ENCODE measurements at regions of chr15 and their contacts with region 1.

Region 1: GRCh38 chr15:48877630-48878595 is at the start of gene EID1:
- DNase-seq: peak; percentile 93 to 97 (median 97)
- ATAC-seq: peak; percentile 99 to 100
- H3K4me3 ChIP-seq: peak within 1 kb of the TSS; percentile 72
- H3K27ac ChIP-seq: peak within 1 kb of the TSS; percentile 91
- H3K4me1 ChIP-seq: no peaks in the 10 kb centered on the region
- H3K27me3 ChIP-seq: no peaks in the 10 kb centered on the region
- total RNA-seq, gene EID1: 258 to 299 (median 276) TPM

Region 2: GRCh38 chr15:48810414-48811317 is 67.2 kb before region 1 on chr15 and contains the start of gene CEP152:
- intact Hi-C with region 1: no loop called
- DNase-seq: peak; percentile 98
- ATAC-seq: peak; percentile 99
- H3K4me3 ChIP-seq: peak within 1 kb of the TSS; percentile 73
- H3K27ac ChIP-seq: no peak within 1 kb of the TSS
- H3K4me1 ChIP-seq: peaks cover 3% of the 10 kb centered on the region
- H3K27me3 ChIP-seq: no peaks in the 10 kb centered on the region
- total RNA-seq, gene CEP152: 2.1 to 2.8 (median 2.6) TPM

Region 3: GRCh38 chr15:48963524-48964113 is 85.7 kb after region 1 on chr15 and contains the start of gene SHC4:
- intact Hi-C with region 1: loop called in 1 of 4 experiments (anchors 5 kb)
- DNase-seq: peak; percentile 79 to 90 (median 81)
- ATAC-seq: peak; percentile 80 to 86
- H3K4me3 ChIP-seq: peak within 1 kb of the TSS; percentile 69
- H3K27ac ChIP-seq: peak within 1 kb of the TSS; percentile 37
- H3K4me1 ChIP-seq: no peaks in the 10 kb centered on the region
- H3K27me3 ChIP-seq: no peaks in the 10 kb centered on the region
- total RNA-seq, gene SHC4: 2.6 to 6.6 (median 3.6) TPM